ENCODE measurements at regions of chr4 and their contacts with region 1.

Region 1: GRCh38 chr4:1249148-1249730 is 309 bp upstream of the CTBP1 start:
- DNase-seq: peak; percentile 72 to 97 (median 83)
- ATAC-seq: peak; percentile 68
- H3K4me3 ChIP-seq: peak overlapping the region; percentile 86
- H3K4me3 Mint-ChIP-seq: peak overlapping the region; percentile 97
- H3K27ac ChIP-seq: peak overlapping the region; percentile 89 to 92
- H3K27ac Mint-ChIP-seq: peak overlapping the region; percentile 98
- H3K4me1 ChIP-seq: peaks cover 79% of the 10 kb centered on the region
- H3K4me1 Mint-ChIP-seq: peaks cover 69% of the 10 kb centered on the region
- H3K27me3 ChIP-seq: no peaks in the 10 kb centered on the region
- H3K27me3 Mint-ChIP-seq: no peaks in the 10 kb centered on the region
- CTCF ChIP-seq: no peak

Region 2: DNA sequence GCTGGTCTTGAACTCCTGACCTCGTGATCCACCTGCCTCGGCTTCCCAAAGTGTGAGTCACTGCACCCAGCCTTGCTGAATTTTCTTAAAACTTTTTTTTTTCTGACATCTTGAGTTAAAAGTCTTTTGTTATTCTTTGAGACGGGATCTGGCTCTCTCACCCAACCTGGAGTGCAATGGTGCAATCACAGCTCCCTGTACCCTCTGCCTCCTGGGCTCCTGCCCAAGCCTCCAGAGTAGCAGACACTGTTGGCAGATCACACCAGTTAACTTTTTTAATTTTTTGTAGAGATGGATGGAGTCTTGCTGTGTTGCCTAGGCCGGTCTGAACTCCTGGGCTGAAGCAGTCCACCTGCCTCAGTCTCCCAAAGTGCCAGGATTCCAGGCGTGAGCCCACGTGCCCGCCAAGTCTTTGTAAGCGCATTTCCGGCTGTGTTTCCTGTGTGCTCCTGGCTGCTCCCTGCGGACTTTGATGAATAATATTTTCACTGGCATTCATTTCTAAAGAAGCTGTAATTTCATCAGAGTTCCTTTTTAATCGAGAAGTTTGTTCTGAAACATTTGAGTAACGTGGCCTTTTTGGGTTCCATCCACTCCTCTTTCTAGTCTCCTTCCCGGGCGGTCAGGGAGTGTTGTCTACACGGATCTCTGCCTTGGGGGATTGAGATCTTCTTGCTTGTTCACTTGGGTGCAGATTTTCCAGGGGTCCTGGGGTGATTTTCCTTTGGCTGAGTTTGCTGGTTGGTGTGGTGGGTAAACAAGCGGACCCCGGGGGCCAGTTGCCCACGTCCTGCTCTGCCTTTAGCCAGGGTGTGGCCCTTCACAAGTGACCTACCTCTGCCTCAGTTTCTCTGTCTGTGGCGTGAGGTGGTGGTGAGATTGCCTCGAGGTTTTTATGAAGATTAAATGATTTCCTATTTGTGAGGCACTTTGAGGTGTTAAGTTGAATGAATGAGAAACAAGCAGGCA is 499.3 kb before region 1 on chr4:
- CTCF ChIA-PET with region 1: no interaction called
- POLR2A ChIA-PET with region 1: no interaction called
- intact Hi-C with region 1: no loop called
- DNase-seq: no peak
- ATAC-seq: no peak
- H3K4me3 ChIP-seq: no peak overlapping the region
- H3K4me3 Mint-ChIP-seq: no peak overlapping the region
- H3K27ac ChIP-seq: no peak overlapping the region
- H3K27ac Mint-ChIP-seq: no peak overlapping the region
- H3K4me1 ChIP-seq: peaks cover 4% of the 10 kb centered on the region
- H3K4me1 Mint-ChIP-seq: peaks cover 4% of the 10 kb centered on the region
- H3K27me3 ChIP-seq: no peaks in the 10 kb centered on the region
- H3K27me3 Mint-ChIP-seq: no peaks in the 10 kb centered on the region
- CTCF ChIP-seq: no peak

Region 3: DNA sequence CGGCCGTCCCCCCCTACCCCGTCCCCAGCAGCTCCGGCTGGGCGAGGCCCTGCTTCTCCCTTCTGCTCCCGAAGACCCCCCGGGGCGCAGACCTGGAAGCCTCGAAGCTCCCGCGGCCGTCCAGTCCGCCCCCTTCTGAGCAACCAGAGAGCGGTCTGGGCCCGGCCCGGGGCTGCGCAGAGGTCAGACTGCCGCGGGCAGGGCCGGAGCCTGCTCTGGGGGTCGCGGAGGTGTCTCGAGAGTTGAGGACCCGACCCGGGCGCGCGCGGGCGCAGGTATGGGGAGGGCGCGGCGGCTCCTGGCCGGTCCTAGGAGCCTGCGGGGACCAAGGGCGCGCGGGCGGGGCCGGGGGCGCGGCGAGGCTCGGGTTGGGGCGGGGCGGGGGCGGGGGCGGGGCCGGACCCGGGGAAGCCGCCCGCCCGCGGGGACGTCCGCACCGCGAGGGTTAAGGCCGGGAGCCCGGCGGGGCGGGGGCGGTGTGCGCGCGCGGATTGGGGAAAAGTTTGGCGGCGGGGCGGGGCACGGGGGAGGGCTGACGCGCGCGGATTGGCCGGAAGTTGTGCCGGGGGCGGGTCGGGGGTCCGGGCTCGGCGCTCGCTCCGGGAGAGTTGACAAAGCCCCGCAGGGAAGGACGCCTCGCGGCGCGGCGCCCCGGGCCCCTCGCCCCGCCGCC is 238.1 kb before region 1 on chr4 and contains the start of gene FGFRL1:
- CTCF ChIA-PET with region 1: no interaction called
- POLR2A ChIA-PET with region 1: interaction called, 4 read pairs
- intact Hi-C with region 1: loop called in 1 of 2 experiments (anchors 2 kb)
- DNase-seq: peak; percentile 84 to 97 (median 93)
- ATAC-seq: peak; percentile 58
- H3K4me3 ChIP-seq: peak within 1 kb of the TSS; percentile 66
- H3K4me3 Mint-ChIP-seq: peak within 1 kb of the TSS; percentile 91
- H3K27ac ChIP-seq: peak within 1 kb of the TSS; percentile 60 to 62
- H3K27ac Mint-ChIP-seq: peak within 1 kb of the TSS; percentile 97
- H3K4me1 ChIP-seq: peaks cover 31% of the 10 kb centered on the region
- H3K4me1 Mint-ChIP-seq: peaks cover 14% of the 10 kb centered on the region
- H3K27me3 ChIP-seq: peaks cover 13 to 19% of the 10 kb centered on the region in 2 experiments
- H3K27me3 Mint-ChIP-seq: peaks cover 37% of the 10 kb centered on the region
- CTCF ChIP-seq: no peak
- total RNA-seq, gene FGFRL1: 21.8 to 25.0 TPM

Region 4: GRCh38 chr4:1167247-1167949 is 81.8 kb before region 1 on chr4:
- CTCF ChIA-PET with region 1: interaction called, 7 read pairs
- POLR2A ChIA-PET with region 1: interaction called, 10 read pairs
- intact Hi-C with region 1: loop called (anchors 1 kb)
- DNase-seq: peak; percentile 69 to 96 (median 84)
- ATAC-seq: peak; percentile 87
- H3K4me3 ChIP-seq: peak overlapping the region; percentile 79
- H3K4me3 Mint-ChIP-seq: peak overlapping the region; percentile 90
- H3K27ac ChIP-seq: no peak overlapping the region
- H3K27ac Mint-ChIP-seq: peak overlapping the region; percentile 67
- H3K4me1 ChIP-seq: peaks cover 40% of the 10 kb centered on the region
- H3K4me1 Mint-ChIP-seq: peaks cover 25% of the 10 kb centered on the region
- H3K27me3 ChIP-seq: peaks cover 19 to 21% of the 10 kb centered on the region in 2 experiments
- H3K27me3 Mint-ChIP-seq: peaks cover 16% of the 10 kb centered on the region
- CTCF ChIP-seq: peak; percentile 97

Region 5: GRCh38 chr4:1266881-1267763 is 17.9 kb after region 1 on chr4:
- CTCF ChIA-PET with region 1: interaction called, 21 read pairs
- POLR2A ChIA-PET with region 1: interaction called, 48 read pairs
- intact Hi-C with region 1: loop called (anchors 1 kb)
- DNase-seq: peak in 3 of 14 experiments; percentile 23 to 40 (median 32)
- ATAC-seq: peak; percentile 81
- H3K4me3 ChIP-seq: peak overlapping the region; percentile 51
- H3K4me3 Mint-ChIP-seq: peak overlapping the region; percentile 78
- H3K27ac ChIP-seq: peak overlapping the region; percentile 38 to 58
- H3K27ac Mint-ChIP-seq: peak overlapping the region; percentile 94
- H3K4me1 ChIP-seq: peaks cover 4% of the 10 kb centered on the region
- H3K4me1 Mint-ChIP-seq: peaks cover 14% of the 10 kb centered on the region
- H3K27me3 ChIP-seq: no peaks in the 10 kb centered on the region
- H3K27me3 Mint-ChIP-seq: no peaks in the 10 kb centered on the region
- CTCF ChIP-seq: no peak

Region 6: GRCh38 chr4:1277667-1278335 is 28.6 kb after region 1 on chr4:
- CTCF ChIA-PET with region 1: no interaction called
- POLR2A ChIA-PET with region 1: no interaction called
- intact Hi-C with region 1: no loop called
- DNase-seq: peak in 3 of 14 experiments; percentile 21 to 48 (median 41)
- ATAC-seq: peak; percentile 41
- H3K4me3 ChIP-seq: no peak overlapping the region
- H3K4me3 Mint-ChIP-seq: no peak overlapping the region
- H3K27ac ChIP-seq: no peak overlapping the region
- H3K27ac Mint-ChIP-seq: no peak overlapping the region
- H3K4me1 ChIP-seq: no peaks in the 10 kb centered on the region
- H3K4me1 Mint-ChIP-seq: no peaks in the 10 kb centered on the region
- H3K27me3 ChIP-seq: no peaks in the 10 kb centered on the region
- H3K27me3 Mint-ChIP-seq: no peaks in the 10 kb centered on the region
- CTCF ChIP-seq: no peak

Region 7: GRCh38 chr4:1318488-1319213 is 69.4 kb after region 1 on chr4:
- CTCF ChIA-PET with region 1: no interaction called
- POLR2A ChIA-PET with region 1: no interaction called
- intact Hi-C with region 1: no loop called
- DNase-seq: peak in 6 of 14 experiments; percentile 22 to 61 (median 46)
- ATAC-seq: no peak
- H3K4me3 ChIP-seq: no peak overlapping the region
- H3K4me3 Mint-ChIP-seq: no peak overlapping the region
- H3K27ac ChIP-seq: no peak overlapping the region
- H3K27ac Mint-ChIP-seq: no peak overlapping the region
- H3K4me1 ChIP-seq: peaks cover 22% of the 10 kb centered on the region
- H3K4me1 Mint-ChIP-seq: peaks cover 16% of the 10 kb centered on the region
- H3K27me3 ChIP-seq: no peaks in the 10 kb centered on the region
- H3K27me3 Mint-ChIP-seq: no peaks in the 10 kb centered on the region
- CTCF ChIP-seq: no peak

Region 8: GRCh38 chr4:1329408-1330371 is 80.5 kb after region 1 on chr4:
- CTCF ChIA-PET with region 1: no interaction called
- POLR2A ChIA-PET with region 1: interaction called, 4 read pairs
- intact Hi-C with region 1: loop called in 1 of 2 experiments (anchors 5 kb)
- DNase-seq: peak in 10 of 14 experiments; percentile 15 to 84 (median 56)
- ATAC-seq: peak; percentile 63
- H3K4me3 ChIP-seq: no peak overlapping the region
- H3K4me3 Mint-ChIP-seq: peak overlapping the region; percentile 83
- H3K27ac ChIP-seq: peak overlapping the region; percentile 41 to 47
- H3K27ac Mint-ChIP-seq: peak overlapping the region; percentile 91
- H3K4me1 ChIP-seq: peaks cover 79% of the 10 kb centered on the region
- H3K4me1 Mint-ChIP-seq: peaks cover 32% of the 10 kb centered on the region
- H3K27me3 ChIP-seq: no peaks in the 10 kb centered on the region
- H3K27me3 Mint-ChIP-seq: no peaks in the 10 kb centered on the region
- CTCF ChIP-seq: no peak

Region 9: GRCh38 chr4:1721004-1721665 is 471.9 kb after region 1 on chr4 and contains the starts of genes TACC3 and TMEM129:
- CTCF ChIA-PET with region 1: no interaction called
- POLR2A ChIA-PET with region 1: no interaction called
- intact Hi-C with region 1: loop called in 1 of 2 experiments (anchors 5 kb)
- DNase-seq: peak; percentile 90 to 99 (median 95)
- ATAC-seq: peak; percentile 80
- H3K4me3 ChIP-seq: peak within 1 kb of the TSS; percentile 53
- H3K4me3 Mint-ChIP-seq: peak within 1 kb of the TSS; percentile 92
- H3K27ac ChIP-seq: peak within 1 kb of the TSS; percentile 85 to 88
- H3K27ac Mint-ChIP-seq: peak within 1 kb of the TSS; percentile 99
- H3K4me1 ChIP-seq: peaks cover 77% of the 10 kb centered on the region
- H3K4me1 Mint-ChIP-seq: peaks cover 56% of the 10 kb centered on the region
- H3K27me3 ChIP-seq: no peaks in the 10 kb centered on the region
- H3K27me3 Mint-ChIP-seq: no peaks in the 10 kb centered on the region
- CTCF ChIP-seq: no peak
- total RNA-seq, gene TACC3: 123 TPM
- total RNA-seq, gene TMEM129: 17.2 to 17.6 TPM